ENCODE measurements at regions of chr1 and their contacts with region 1.

Region 1: GRCh38 chr1:182101415-182102042 is 40.0 kb upstream of the ZNF648 start:
- DNase-seq: peak; percentile 91
- H3K4me3 Mint-ChIP-seq: peak overlapping the region; percentile 27
- H3K27ac Mint-ChIP-seq: peak overlapping the region; percentile 68
- H3K4me1 Mint-ChIP-seq: peaks cover 47% of the 10 kb centered on the region
- H3K27me3 Mint-ChIP-seq: no peaks in the 10 kb centered on the region
- CTCF ChIP-seq: no peak

Region 2: GRCh38 chr1:182159443-182159842 is 57.9 kb after region 1 on chr1:
- CTCF ChIA-PET with region 1: no interaction called
- intact Hi-C with region 1: no loop called
- DNase-seq: no peak
- H3K4me3 Mint-ChIP-seq: no peak overlapping the region
- H3K27ac Mint-ChIP-seq: no peak overlapping the region
- H3K4me1 Mint-ChIP-seq: no peaks in the 10 kb centered on the region
- H3K27me3 Mint-ChIP-seq: no peaks in the 10 kb centered on the region
- CTCF ChIP-seq: no peak

Region 3: DNA sequence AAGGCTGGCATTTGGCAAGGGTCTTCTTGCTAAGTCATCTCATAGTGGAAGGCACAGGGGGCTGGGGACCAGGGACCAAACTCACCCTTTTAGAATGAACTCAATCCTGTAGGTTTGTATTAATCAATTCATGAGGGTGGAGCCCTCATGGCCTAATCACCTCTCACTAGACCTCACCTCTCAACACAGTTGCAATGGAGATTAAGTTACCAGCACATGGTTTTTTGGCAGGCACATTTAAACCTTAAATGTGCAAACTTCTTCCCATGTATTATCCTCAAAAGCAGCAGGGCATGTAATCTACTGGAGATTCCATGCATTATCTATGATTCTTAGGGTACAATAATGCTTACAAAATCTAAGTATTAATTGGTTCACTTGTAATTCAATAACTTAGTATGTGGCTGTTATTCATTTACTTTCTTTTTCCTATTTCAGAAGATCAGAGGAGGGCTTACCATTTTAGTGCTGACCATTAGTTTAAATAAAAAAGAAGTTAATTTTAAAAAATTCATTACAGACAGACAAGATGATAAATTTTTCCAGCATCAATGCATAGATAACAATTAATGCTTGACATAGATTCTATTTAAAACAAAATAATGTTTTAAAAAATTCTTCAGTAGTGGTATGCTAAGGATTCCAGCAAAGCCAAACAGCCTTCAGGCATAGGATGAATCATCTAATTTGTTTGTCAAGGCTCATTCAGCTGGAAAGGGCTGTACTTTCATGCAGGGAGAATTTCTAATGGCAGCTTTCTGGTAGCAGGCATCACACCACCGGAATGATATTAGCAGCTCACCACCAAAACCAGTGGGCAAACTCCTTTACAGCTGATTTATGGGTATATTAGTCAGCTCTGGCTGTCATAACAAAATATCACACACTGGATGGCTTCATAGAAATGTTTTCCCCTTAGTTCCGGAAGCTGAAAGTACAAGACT is 84.6 kb after region 1 on chr1:
- CTCF ChIA-PET with region 1: interaction called, 3 read pairs
- intact Hi-C with region 1: loop called (anchors 5 kb)
- DNase-seq: peak; percentile 37
- H3K4me3 Mint-ChIP-seq: no peak overlapping the region
- H3K27ac Mint-ChIP-seq: no peak overlapping the region
- H3K4me1 Mint-ChIP-seq: peaks cover 48% of the 10 kb centered on the region
- H3K27me3 Mint-ChIP-seq: no peaks in the 10 kb centered on the region
- CTCF ChIP-seq: no peak

Region 4: GRCh38 chr1:182215764-182216163 is 114.2 kb after region 1 on chr1:
- CTCF ChIA-PET with region 1: no interaction called
- intact Hi-C with region 1: no loop called
- DNase-seq: no peak
- H3K4me3 Mint-ChIP-seq: no peak overlapping the region
- H3K27ac Mint-ChIP-seq: no peak overlapping the region
- H3K4me1 Mint-ChIP-seq: peaks cover 20% of the 10 kb centered on the region
- H3K27me3 Mint-ChIP-seq: no peaks in the 10 kb centered on the region
- CTCF ChIP-seq: no peak

Measured in Calu3 (cell line).